ENCODE measurements at regions of chr15 and their contacts with region 1.

Region 1: GRCh38 chr15:22786868-22787698 is 639 bp downstream of the NIPA1 start:
- DNase-seq: peak; percentile 75

Region 2: GRCh38 chr15:22838292-22839042 is 51.4 kb after region 1 on chr15 and contains the start of gene NIPA2:
- intact Hi-C with region 1: loop called (anchors 10 kb)
- DNase-seq: peak; percentile 99
- total RNA-seq, gene NIPA2: 24.3 TPM

Region 3: DNA sequence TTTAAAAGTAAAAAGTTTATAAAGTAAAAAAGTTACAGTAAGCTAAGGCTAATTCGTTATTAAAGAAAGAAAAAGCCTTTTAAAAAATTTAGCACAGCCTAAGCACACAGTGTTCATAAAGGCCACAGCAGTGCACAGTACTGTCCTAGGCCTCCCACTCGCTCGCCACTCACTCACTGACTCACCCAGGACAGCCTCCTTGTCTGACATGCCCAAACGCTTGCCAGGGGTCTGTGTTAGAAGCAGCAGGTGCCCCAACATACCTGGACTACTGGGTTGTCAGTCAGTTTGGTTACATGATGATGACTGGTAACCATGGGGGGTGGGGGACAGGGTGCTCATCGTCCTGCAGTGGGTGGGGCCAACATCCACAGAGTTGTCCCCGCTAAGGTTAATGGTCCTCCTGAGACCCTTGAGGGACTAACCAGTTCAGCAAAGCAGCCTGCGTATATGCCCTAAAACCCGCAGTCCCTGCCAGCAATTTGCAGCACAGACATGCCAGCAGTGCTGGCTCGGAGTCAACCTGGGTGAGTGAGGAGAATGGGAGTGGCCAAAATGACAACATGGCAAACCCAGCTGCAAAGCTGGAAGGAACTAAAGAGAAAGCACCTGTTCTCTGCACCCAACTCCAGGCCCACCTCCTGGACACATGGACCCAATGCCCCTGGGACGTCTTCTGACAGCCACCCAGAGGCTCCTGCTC is 143.8 kb after region 1 on chr15:
- intact Hi-C with region 1: no loop called
- DNase-seq: no peak

Region 4: DNA sequence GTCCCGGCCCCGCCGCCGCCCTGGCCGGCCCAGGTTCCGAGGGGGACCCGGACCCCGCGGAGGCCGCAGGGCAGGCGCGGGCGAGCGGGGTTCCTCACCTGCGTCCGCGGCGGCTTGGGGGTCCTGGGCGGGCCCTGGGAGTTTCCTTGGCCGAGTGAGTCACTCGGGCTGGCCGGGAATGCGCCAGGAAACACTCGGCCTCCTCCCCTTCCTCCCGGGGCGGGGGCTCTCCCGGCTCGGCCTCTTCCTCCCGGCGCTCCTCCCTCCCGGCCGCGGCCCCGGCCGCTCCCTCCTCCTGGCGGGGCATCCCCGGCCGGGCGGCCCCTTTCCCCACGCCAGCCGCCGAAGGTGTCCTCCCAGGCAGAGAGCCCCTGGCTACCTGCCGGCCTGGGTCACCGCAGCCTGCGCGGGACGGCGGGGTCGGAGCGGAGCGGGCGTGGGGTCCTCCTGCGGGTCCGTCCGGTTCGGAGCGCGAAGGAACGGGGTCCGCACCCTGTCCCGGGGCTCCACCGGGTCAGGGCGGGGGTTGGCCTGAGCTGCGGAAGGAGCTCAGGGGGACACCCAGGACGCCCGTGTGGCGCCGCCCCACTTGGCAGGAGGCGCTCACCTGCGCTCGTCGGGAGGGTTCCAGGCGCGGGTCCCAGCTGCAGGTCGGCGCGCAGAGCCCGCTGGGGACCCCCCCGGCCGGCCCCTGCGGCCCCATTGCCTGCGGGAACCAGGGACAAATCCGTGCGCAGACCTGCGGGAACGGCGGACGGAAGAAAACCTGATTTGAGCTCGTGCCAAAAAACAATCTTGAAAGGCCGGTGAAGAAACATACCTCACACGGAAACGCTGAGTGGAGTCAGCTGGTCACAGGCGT is 193.3 kb after region 1 on chr15 and contains the start of gene CYFIP1:
- intact Hi-C with region 1: no loop called
- DNase-seq: peak; percentile 93
- total RNA-seq, gene CYFIP1: 35.6 TPM

Region 5: DNA sequence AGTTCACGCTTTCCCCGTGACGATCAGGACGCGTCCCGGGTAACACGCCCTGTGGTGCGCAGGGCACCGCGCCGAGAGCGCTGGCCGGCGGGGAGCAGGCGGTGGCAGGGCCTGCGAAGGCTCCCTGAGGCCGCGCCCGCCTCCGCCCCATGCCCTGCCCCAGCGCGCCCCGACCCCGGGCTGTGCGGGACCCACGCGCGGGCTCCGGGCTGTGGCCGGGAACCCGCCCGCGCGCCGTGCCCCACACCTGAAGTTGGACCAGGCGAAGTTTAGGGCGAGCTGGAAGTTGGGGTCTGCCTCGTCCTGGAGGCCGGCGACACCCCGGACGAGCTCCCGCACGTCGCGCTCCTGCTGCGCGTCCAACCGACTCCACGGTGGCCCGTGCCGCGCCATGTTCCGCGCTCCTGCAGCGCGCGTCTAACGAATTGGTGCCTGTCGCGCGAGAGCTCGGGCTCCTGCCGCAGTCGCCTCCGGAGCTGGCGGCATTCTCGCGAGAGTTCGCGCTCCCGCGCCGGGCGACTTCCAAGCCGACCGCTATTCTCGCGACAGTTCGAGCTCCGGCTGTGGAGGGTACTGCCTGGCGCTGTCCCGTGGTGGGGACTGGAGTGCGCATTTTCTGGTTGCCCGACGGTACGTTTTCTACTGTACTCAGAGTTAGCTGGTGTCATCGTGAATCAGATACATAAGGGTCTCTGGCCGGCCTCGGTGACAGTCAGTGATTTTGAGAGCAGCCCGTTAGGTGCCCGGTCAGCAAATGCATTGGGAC is 252.3 kb after region 1 on chr15 and contains the start of gene TUBGCP5:
- intact Hi-C with region 1: no loop called
- DNase-seq: peak; percentile 95
- total RNA-seq, gene TUBGCP5: 11.9 TPM

Region 6: DNA sequence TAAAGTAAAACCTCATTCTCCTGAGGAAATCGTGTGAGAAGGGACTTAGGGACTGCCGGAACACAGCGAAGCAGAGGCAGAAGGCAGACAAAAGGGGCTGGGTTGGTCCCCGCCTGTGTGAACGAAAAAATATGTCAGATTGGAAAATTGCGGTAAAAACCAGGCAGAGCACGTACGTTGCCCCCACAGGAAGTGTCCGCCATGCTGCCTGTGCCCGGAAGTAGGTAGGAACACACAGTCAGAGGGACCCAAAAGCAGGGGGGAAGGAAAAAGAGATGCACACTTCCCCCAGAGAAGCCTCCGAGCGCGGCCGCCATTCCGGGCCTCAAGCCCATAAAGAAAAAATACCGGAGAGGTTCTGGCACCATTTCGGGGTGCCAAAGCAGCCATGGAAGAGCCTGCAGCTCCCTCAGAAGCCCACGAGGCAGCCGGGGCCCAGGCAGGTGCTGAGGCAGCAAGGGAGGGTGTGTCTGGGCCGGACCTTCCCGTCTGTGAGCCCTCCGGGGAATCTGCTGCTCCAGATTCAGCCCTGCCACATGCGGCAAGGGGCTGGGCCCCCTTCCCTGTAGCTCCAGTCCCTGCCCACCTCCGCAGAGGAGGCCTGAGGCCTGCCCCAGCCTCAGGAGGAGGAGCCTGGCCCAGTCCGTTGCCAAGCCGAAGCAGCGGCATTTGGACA is 778.5 kb after region 1 on chr15 and contains the start of gene MKRN3:
- intact Hi-C with region 1: no loop called
- DNase-seq: no peak
- total RNA-seq, gene MKRN3: 0.32 TPM

Measured in cardiac septum (tissue), 1 donor.